Activated CD8-positive, alpha-beta T cell treated with anti-CD3 and anti-CD28 coated beads for 36 hours (primary cell): ENCODE measurements at regions of chr17 and their contacts with region 1.

Region 1: GRCh38 chr17:5468075-5468473 is 708 bp downstream of the DHX33 start:
- DNase-seq: peak; percentile 33
- ATAC-seq: peak; percentile 15
- H3K4me3 Mint-ChIP-seq: peak overlapping the region; percentile 89
- H3K27ac Mint-ChIP-seq: peak overlapping the region; percentile 74
- H3K4me1 Mint-ChIP-seq: peaks cover 40% of the 10 kb centered on the region
- H3K27me3 Mint-ChIP-seq: no peaks in the 10 kb centered on the region
- CTCF ChIP-seq: no peak

Region 2: DNA sequence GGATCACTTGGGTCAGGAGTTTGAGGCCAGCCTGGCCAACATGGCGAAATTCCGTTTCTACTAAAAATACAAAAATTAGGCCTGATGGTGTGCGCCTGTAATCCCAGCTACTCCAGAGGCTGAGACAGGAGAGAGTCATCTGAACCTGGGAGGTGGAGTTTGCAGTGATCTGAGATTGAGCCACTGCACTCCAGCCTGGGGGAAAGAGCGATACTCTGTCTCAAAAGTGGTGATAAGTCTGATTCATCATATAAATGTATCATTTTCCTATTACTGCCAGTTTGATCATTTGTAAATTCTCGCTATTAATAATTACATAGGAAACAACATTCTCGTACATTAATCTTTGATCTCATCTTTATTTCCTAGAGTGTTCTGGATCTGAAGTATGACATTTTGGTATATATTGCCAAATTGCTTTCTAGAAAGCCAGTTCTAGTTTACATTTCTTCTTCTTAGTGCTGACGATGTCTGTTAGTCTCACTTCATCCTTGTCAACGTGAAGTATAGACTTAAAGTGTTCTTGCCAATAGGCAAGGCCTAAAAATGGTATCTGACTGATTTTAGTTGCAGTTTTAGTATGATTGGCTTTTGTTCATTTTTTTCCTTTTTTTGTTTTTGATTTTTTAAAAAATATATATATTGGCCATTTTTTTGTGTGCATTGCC is 176.3 kb before region 1 on chr17:
- CTCF ChIA-PET with region 1: no interaction called
- POLR2A ChIA-PET with region 1: no interaction called
- intact Hi-C with region 1: no loop called
- DNase-seq: no peak
- ATAC-seq: no peak
- H3K4me3 Mint-ChIP-seq: no peak overlapping the region
- H3K27ac Mint-ChIP-seq: peak overlapping the region; percentile 13
- H3K4me1 Mint-ChIP-seq: peaks cover 38% of the 10 kb centered on the region
- H3K27me3 Mint-ChIP-seq: no peaks in the 10 kb centered on the region
- CTCF ChIP-seq: no peak

Region 3: GRCh38 chr17:5478992-5479391 is 10.9 kb after region 1 on chr17:
- CTCF ChIA-PET with region 1: interaction called, 7 read pairs
- POLR2A ChIA-PET with region 1: interaction called, 55 read pairs
- intact Hi-C with region 1: no loop called
- DNase-seq: no peak
- ATAC-seq: no peak
- H3K4me3 Mint-ChIP-seq: no peak overlapping the region
- H3K27ac Mint-ChIP-seq: no peak overlapping the region
- H3K4me1 Mint-ChIP-seq: peaks cover 30% of the 10 kb centered on the region
- H3K27me3 Mint-ChIP-seq: no peaks in the 10 kb centered on the region
- CTCF ChIP-seq: no peak

Region 4: DNA sequence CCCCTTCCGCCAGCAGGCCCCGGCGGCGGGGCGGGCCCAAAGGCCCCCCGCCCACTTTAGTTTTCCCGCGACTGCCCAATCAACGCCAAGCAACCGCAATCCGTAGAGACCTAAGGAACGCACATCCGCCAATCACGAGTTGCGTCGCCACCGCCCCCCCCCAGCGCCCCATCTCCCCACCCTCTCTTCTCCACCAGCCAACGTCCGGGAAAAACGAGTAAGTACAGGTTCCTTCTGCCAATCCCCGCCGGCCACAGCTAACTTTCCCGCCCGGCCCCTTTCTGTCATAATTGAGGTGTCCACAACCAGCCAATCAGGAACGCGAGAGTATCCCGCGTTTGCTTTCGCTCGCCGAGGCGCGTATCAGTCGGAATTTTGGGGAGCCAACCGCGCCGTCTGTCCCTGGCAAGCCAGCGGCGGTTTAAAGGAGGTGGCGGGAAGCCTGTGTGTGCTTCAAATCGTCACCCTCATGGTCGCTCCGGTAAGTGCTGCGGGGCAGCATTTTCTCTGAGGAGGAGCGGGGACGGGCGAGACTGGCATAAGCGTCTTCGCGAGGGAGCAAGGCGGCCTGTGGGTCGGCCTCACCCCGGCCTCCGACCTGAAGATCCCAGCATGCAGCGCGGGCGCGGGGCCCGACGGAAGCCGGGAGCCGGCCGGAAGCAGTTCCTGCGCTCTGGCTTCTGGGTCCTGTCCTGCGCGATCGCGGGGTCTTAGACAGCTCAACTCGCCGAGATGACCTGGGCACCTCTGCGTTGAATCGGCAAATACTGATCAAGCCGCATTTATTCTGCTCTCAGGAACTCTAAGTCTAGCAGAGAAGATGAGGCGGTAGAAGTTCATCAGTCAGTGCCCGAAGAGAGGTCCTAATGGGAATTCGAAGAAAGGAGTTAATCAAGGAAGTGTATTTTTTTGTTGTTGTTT is 18.4 kb after region 1 on chr17 and contains the start of gene MIS12:
- CTCF ChIA-PET with region 1: interaction called, 8 read pairs
- POLR2A ChIA-PET with region 1: interaction called, 55 read pairs
- intact Hi-C with region 1: no loop called
- DNase-seq: peak; percentile 100
- ATAC-seq: peak; percentile 92
- H3K4me3 Mint-ChIP-seq: peak within 1 kb of the TSS; percentile 93
- H3K27ac Mint-ChIP-seq: peak within 1 kb of the TSS; percentile 99
- H3K4me1 Mint-ChIP-seq: peaks cover 56% of the 10 kb centered on the region
- H3K27me3 Mint-ChIP-seq: no peaks in the 10 kb centered on the region
- CTCF ChIP-seq: no peak
- total RNA-seq, gene MIS12: 30.3 to 35.0 TPM

Region 5: GRCh38 chr17:5592382-5592781 is 124.3 kb after region 1 on chr17:
- CTCF ChIA-PET with region 1: no interaction called
- POLR2A ChIA-PET with region 1: no interaction called
- intact Hi-C with region 1: no loop called
- DNase-seq: no peak
- ATAC-seq: no peak
- H3K4me3 Mint-ChIP-seq: no peak overlapping the region
- H3K27ac Mint-ChIP-seq: no peak overlapping the region
- H3K4me1 Mint-ChIP-seq: peaks cover under 1% of the 10 kb centered on the region
- H3K27me3 Mint-ChIP-seq: peaks cover 12% of the 10 kb centered on the region
- CTCF ChIP-seq: peak; percentile 62